Ascending aorta (tissue), 2 donors: ENCODE measurements at regions of chr10 and their contacts with region 1.

Region 1: DNA sequence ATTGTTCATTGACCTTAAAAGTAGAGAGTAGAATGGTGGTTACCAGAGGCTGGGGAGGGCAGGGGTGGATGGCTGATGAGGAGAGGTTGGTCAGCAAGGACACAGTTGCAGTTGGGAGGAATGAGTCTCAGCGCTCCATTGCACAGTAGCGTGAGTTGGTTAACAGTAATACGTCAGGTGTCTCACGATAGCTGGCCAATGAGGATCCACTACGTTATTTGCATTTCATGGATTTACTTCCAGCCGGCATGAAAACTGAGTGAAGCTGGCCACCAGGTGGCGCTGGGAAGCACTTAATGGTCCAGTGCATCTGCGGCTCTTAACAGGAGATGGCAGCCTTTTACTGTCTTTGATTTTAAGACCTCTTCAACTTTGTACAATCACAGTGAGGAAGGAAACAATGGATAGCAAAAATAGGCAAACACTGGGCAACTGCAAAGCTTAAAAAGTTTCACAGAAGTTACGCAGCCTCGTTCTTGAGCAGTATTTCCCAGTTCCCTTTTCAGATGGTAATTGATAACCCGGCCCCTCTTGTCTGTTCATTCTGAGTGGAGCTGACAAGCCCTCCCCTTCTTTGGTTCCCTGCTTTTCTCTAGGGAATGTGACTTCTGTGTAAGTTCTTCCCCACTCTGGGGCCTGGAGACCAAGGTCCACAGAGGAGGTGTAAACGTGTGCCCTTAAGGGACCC is 23.7 kb downstream of the AKR1E2 start:
- DNase-seq: peak; percentile 55 to 97
- H3K4me3 ChIP-seq: no peak overlapping the region
- H3K27ac ChIP-seq: peak overlapping the region; percentile 37 to 39
- H3K4me1 ChIP-seq: peaks cover 2 to 26% of the 10 kb centered on the region in 2 donors
- H3K27me3 ChIP-seq: no peaks in the 10 kb centered on the region
- CTCF ChIP-seq: peak; percentile 96 to 99 (median 99)

Region 2: GRCh38 chr10:4902571-4903011 is 52.9 kb after region 1 on chr10:
- intact Hi-C with region 1: loop called (anchors 5 kb)
- DNase-seq: no peak
- H3K4me3 ChIP-seq: peak overlapping the region; percentile 22 to 33
- H3K27ac ChIP-seq: peak overlapping the region; percentile 67 to 73
- H3K4me1 ChIP-seq: peaks cover 0 to 27% of the 10 kb centered on the region in 2 donors
- H3K27me3 ChIP-seq: no peaks in the 10 kb centered on the region
- CTCF ChIP-seq: no peak

Region 3: DNA sequence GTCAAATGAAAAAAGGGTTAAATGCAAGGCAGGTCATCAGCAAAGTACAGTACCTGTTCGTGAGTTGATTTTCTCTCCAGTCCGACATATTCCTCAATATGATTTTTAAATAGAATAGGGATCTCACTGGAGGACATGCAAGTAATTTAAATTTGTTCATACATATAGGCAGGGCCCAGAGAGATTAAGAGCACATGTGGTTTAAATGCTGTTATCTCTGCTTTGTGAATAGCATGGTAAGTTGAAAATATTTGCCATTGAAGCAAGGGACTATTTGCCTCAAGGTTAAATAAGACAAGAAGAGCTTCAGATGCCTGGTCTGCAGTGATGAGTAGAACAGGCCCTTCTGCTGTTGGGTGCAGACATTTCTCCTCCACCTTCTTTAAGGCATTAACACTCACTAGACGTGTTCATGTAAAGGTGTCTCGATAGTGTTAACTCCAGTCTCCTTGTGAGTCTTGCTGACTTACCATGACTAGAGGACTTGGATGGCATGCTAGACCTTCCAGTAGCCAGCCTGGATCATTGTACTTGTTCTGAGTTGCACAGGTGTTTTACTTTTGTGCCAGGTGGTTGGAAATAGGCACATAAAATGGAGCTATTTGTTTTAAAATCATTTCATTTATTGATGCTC is 229.0 kb after region 1 on chr10:
- intact Hi-C with region 1: loop called (anchors 5 kb)
- DNase-seq: no peak
- H3K4me3 ChIP-seq: no peak overlapping the region
- H3K27ac ChIP-seq: no peak overlapping the region
- H3K4me1 ChIP-seq: peaks cover 0 to 6% of the 10 kb centered on the region in 2 donors
- H3K27me3 ChIP-seq: no peaks in the 10 kb centered on the region
- CTCF ChIP-seq: no peak

Region 4: DNA sequence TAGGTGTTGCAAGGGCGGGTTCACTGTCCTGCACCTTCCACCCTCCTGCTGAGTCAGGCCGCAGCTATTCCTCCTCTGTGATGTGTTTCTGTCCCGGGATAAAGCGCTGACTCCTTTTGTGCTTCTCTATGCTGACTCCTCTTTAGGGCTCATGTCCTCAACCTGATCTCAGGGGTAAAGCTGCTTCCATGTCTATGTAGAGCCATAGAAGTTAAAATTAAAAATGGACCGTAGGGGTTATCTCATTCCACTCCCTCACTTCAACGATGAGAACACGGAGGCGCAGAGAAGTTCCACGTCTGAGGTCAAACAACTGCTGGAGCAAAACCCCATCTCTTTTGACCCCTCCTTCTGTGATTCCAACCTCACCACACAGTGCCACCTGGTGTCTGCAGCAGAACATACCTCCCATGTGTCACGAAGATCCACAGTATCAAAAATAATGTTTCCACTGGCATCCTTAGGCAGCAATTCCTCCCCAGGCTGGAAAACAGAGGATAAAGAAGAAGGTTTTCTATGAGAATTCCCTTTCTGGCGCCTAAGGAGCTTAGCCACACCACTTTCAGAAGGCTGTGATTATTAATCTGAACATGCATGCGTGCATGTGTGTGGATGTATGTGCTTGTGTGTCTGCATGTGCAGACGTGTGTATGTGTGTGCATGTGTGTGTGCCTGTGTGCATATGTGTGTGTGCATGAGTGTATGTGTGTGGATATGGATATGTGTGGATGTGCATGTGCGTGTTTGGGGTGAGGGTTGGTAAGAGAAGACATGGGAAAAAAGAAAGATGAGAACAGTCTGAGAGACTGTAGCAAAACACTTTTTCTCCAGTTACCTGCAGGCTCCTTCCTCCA is 433.8 kb after region 1 on chr10:
- intact Hi-C with region 1: loop called (anchors 1 kb)
- DNase-seq: peak in 1 of 2 donors; percentile 75
- H3K4me3 ChIP-seq: no peak overlapping the region
- H3K27ac ChIP-seq: no peak overlapping the region
- H3K4me1 ChIP-seq: no peaks in the 10 kb centered on the region
- H3K27me3 ChIP-seq: no peaks in the 10 kb centered on the region
- CTCF ChIP-seq: peak; percentile 53 to 65 (median 60)

Region 5: GRCh38 chr10:5434017-5434753 is 584.5 kb after region 1 on chr10:
- intact Hi-C with region 1: loop called (anchors 10 kb)
- DNase-seq: no peak
- H3K4me3 ChIP-seq: peak overlapping the region in 1 of 2 donors; percentile 20
- H3K27ac ChIP-seq: peak overlapping the region; percentile 37 to 57
- H3K4me1 ChIP-seq: peaks cover 3 to 31% of the 10 kb centered on the region in 2 donors
- H3K27me3 ChIP-seq: no peaks in the 10 kb centered on the region
- CTCF ChIP-seq: peak; percentile 50 to 67 (median 50)